ENCODE measurements at regions of chr3 and their contacts with region 1.

Region 1: DNA sequence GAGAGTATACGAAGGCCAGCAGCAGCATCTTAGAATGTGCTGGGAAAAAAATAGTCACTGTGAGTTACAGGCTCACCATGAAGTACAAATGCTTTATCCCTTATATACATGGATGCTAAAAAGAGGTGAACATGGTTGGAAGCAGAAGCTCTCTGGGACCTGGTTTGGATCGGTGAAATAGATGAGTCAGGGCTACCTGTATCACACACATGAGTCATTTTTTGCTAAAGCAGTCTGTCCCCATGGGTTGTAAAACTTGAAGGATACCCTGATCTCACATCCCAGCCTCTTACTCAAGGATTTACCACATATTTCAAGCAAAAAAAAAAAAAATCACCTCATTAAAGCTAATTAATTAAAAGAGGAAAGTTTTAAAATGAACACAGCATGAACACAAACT is 6.9 kb upstream of the SERPINI2 start:
- DNase-seq: no peak
- ATAC-seq: no peak
- H3K4me3 ChIP-seq: no peak overlapping the region
- H3K4me3 Mint-ChIP-seq: no peak overlapping the region
- H3K27ac ChIP-seq: no peak overlapping the region
- H3K27ac Mint-ChIP-seq: no peak overlapping the region
- H3K4me1 ChIP-seq: no peaks in the 10 kb centered on the region
- H3K4me1 Mint-ChIP-seq: no peaks in the 10 kb centered on the region
- H3K27me3 ChIP-seq: no peaks in the 10 kb centered on the region
- H3K27me3 Mint-ChIP-seq: no peaks in the 10 kb centered on the region

Region 2: GRCh38 chr3:167493244-167493643 is 12.5 kb after region 1 on chr3:
- CTCF ChIA-PET with region 1: no interaction called
- POLR2A ChIA-PET with region 1: interaction called in 1 of 2 experiments, 11 read pairs
- DNase-seq: no peak
- ATAC-seq: no peak
- H3K4me3 ChIP-seq: no peak overlapping the region
- H3K4me3 Mint-ChIP-seq: no peak overlapping the region
- H3K27ac ChIP-seq: no peak overlapping the region
- H3K27ac Mint-ChIP-seq: no peak overlapping the region
- H3K4me1 ChIP-seq: no peaks in the 10 kb centered on the region
- H3K4me1 Mint-ChIP-seq: no peaks in the 10 kb centered on the region
- H3K27me3 ChIP-seq: no peaks in the 10 kb centered on the region
- H3K27me3 Mint-ChIP-seq: no peaks in the 10 kb centered on the region

Measured in T-cell (primary cell).